Left lung (tissue), 14 donors: ENCODE measurements at regions of chr10 and their contacts with region 1.

Region 1: DNA sequence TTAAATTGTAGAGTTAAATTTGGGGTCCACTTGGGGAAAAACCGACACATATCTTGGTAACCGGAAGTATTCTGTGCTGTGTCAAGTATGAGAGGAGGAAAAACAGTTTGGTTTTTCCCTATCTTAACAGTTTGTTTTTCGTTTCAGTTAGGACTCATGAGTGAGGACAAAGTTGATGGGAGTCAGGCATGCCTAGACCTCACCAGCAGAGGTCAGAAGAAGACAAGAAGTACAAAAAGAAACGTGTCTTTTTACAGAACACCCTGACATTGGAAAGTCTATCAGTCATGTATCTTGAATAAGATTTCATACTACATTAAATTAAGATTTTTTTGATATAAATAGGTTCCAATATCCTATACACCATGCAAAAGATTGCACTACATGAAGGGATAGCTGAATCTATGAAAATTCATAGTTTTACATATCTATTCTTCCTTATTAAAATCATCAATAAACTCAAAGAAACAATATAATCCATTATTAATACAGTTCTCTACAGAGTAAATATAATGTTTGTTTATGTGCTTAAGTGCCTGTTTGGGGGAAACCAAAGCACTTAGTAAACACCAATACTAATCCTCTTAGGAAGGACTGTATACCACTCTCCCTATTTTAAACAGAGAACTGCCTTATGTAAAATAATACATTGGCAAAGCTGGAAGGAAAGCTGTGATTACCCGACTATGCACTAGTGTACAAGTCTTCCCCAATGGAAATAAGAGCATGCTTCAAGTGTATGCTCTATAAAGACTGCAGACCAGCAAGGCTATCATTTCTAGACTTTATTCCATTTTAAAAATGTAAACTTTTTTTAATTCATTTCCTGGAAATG is 95.6 kb downstream of the USP6NL start:
- DNase-seq: peak in 2 of 4 donors; percentile 42 to 76
- ATAC-seq: peak; percentile 95
- H3K4me3 ChIP-seq: no peak overlapping the region
- H3K27ac ChIP-seq: no peak overlapping the region
- H3K4me1 ChIP-seq: peaks cover 3 to 17% of the 10 kb centered on the region in 2 donors
- H3K27me3 ChIP-seq: no peaks in the 10 kb centered on the region
- CTCF ChIP-seq: peak; percentile 83 to 84

Region 2: GRCh38 chr10:11335167-11335652 is 180.6 kb before region 1 on chr10:
- intact Hi-C with region 1: no loop called
- DNase-seq: peak in 2 of 4 donors; percentile 52 to 81
- ATAC-seq: peak; percentile 89
- H3K4me3 ChIP-seq: no peak overlapping the region
- H3K27ac ChIP-seq: no peak overlapping the region
- H3K4me1 ChIP-seq: peaks cover 3 to 30% of the 10 kb centered on the region in 2 donors
- H3K27me3 ChIP-seq: no peaks in the 10 kb centered on the region
- CTCF ChIP-seq: no peak

Region 3: DNA sequence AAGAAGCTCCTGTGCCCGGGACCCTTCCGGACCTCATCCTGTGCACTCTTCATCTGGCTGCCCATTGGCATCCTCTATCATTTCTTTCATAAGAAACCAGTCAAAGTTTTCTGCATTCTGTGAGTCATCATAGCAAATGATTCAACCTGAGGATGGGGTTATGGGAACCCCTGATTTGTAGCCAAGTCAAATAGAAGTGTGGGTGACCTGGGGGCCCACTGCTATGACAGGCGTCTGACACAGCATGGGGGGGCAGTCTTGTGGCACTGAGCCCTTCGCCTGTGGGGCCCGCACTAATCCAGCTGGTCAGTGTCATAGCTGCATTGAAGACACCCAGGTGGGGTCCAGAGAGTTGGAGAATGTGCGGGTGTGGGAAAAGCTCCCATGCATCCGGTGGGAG is 134.8 kb before region 1 on chr10:
- intact Hi-C with region 1: no loop called
- DNase-seq: no peak
- ATAC-seq: no peak
- H3K4me3 ChIP-seq: no peak overlapping the region
- H3K27ac ChIP-seq: no peak overlapping the region
- H3K4me1 ChIP-seq: no peaks in the 10 kb centered on the region
- H3K27me3 ChIP-seq: no peaks in the 10 kb centered on the region
- CTCF ChIP-seq: no peak

Region 4: GRCh38 chr10:11724938-11725776 is 209.3 kb after region 1 on chr10:
- intact Hi-C with region 1: loop called (anchors 5 to 10 kb)
- DNase-seq: peak in 2 of 4 donors; percentile 42 to 58
- ATAC-seq: peak; percentile 91
- H3K4me3 ChIP-seq: no peak overlapping the region
- H3K27ac ChIP-seq: no peak overlapping the region
- H3K4me1 ChIP-seq: no peaks in the 10 kb centered on the region
- H3K27me3 ChIP-seq: no peaks in the 10 kb centered on the region
- CTCF ChIP-seq: peak; percentile 57 to 65

Region 5: GRCh38 chr10:11757821-11758463 is 242.1 kb after region 1 on chr10:
- intact Hi-C with region 1: loop called in 1 of 2 experiments (anchors 10 kb)
- DNase-seq: peak; percentile 67 to 94 (median 86)
- ATAC-seq: peak; percentile 98
- H3K4me3 ChIP-seq: no peak overlapping the region
- H3K27ac ChIP-seq: peak overlapping the region; percentile 39 to 55
- H3K4me1 ChIP-seq: peaks cover 9 to 13% of the 10 kb centered on the region in 2 donors
- H3K27me3 ChIP-seq: no peaks in the 10 kb centered on the region
- CTCF ChIP-seq: peak; percentile 87 to 88